ENCODE measurements at regions of chr5 and their contacts with region 1.

Region 1: DNA sequence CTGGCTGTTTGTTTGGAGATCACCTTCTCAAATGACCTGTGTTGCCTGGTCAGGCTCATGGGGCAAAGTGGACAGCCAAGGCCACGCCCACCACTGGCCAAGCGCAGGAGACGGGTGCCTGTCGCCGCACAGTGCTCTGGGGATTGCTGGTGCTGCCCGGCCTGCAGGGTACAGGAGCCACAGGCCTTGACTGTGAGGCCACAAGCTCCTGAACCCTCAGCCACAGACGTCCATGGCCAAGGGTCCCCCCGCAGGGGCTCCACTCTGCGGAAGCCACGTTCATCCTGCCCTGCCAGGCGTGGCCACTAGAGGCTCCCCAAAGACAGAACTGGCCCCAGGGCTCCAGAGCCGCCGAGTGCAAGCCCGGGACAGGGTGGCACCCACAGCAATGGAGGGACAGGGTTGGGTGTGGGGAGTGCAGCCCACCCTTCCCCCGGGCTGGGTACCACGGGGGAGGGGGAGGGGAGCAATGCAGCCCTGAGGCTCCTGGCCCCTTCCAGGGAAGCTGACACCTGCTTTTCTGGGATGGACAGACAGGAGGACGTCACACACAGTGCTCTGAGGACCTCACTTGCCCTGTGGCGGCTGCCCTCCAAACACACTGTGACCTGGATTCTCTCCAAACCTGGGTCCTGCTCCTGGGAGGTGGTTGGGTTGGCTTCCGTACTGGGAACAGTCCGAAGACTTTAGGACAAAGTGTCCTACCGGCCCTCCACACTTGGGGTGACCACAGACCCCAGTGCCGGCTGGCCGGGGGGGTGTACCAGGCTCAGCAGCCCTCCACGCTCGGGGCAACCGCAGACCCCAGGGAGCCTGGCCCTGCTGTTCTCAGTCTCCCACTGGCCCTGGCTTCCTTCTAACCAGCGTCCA is 21.5 kb downstream of the TPPP start:
- DNase-seq: peak; percentile 52
- H3K4me3 ChIP-seq: no peak overlapping the region
- H3K27ac ChIP-seq: no peak overlapping the region
- H3K4me1 ChIP-seq: no peaks in the 10 kb centered on the region
- H3K27me3 ChIP-seq: no peaks in the 10 kb centered on the region
- CTCF ChIP-seq: peak; percentile 83 to 95
- POLR2A ChIP-seq: no peak

Region 2: DNA sequence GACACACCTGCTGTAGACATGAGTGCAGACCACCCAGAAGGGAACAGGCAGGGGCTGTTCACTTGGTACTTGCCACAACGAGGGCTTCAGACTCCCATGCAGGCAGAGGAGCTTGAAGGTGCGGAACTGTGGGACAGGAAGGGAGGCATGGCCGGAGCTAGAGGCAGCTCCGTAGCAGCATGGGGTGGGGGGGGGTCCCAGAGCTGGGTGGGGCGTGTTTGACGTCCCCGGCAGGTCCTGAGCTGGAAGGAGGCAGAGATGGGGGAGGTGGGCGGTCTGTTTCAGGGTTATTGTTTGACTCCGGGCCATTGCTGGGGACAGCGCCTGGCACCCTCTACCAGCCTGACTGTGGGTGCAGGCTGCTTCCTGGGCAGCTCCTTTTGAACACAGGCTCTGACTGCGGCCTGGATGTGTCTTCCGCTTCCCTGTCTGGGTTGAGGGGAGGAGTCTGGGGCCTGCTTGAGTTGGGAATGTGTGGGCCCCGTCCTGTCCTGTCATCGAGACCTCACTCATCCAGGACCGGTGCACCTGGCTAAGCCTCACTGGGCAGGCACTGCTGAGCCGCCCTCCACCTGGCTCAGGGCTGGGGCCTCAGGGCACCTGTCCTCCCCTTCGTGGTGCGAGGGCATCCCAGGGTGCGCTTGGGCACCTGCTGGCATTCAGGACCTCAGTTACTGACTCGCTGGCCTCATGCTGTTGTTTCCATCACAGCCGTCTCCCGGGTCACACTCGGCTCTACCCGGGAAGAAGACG is 33.1 kb before region 1 on chr5:
- CTCF ChIA-PET with region 1: interaction called, 4 read pairs
- POLR2A ChIA-PET with region 1: no interaction called
- dilution Hi-C with region 1: no loop called
- intact Hi-C with region 1: loop called (anchors 1 kb)
- DNase-seq: no peak
- H3K4me3 ChIP-seq: no peak overlapping the region
- H3K27ac ChIP-seq: no peak overlapping the region
- H3K4me1 ChIP-seq: no peaks in the 10 kb centered on the region
- H3K27me3 ChIP-seq: no peaks in the 10 kb centered on the region
- CTCF ChIP-seq: no peak
- POLR2A ChIP-seq: no peak

Region 3: GRCh38 chr5:685262-686171 is 13.8 kb after region 1 on chr5:
- CTCF ChIA-PET with region 1: no interaction called
- POLR2A ChIA-PET with region 1: no interaction called
- dilution Hi-C with region 1: no loop called
- intact Hi-C with region 1: no loop called
- DNase-seq: no peak
- H3K4me3 ChIP-seq: no peak overlapping the region
- H3K27ac ChIP-seq: no peak overlapping the region
- H3K4me1 ChIP-seq: no peaks in the 10 kb centered on the region
- H3K27me3 ChIP-seq: no peaks in the 10 kb centered on the region
- CTCF ChIP-seq: no peak
- POLR2A ChIP-seq: no peak

Region 4: DNA sequence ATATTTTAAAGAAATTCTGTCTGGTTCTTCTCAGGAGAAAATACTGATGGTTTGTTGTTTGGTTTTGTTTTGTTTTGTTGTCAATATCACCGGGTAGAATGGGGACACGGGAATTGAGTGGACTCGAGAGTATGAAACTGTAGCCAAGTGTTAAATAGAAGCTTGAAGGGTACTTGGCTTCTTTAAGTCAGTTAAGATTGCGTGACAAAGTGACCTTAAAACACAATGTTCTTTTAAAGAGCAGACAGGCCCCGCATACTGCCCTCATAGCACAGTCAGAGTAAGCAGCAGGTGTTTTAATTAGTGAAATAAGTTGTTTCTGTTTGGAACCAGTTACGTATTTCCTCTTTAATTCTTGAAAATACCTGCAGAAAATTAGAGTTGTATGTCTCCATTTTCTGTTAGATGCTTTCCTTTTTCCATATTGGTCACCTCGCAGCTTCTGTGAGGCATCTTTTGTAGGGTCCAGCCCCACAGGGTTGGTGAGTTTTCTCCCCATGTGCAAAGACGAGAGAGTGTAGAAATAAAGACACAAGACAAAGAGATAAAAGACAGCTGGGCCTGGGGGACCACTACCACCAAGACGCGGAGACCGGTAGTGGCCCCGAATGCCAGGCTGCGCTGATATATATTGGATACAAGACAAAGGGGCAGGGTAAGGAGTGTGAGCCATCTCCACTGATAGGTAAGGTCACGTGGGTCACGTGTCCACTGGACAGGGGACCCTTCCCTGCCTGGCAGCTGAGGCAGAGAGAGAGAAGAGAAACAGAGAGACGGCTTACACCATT is 230.6 kb after region 1 on chr5:
- CTCF ChIA-PET with region 1: interaction called, 101 read pairs
- POLR2A ChIA-PET with region 1: no interaction called
- dilution Hi-C with region 1: no loop called
- intact Hi-C with region 1: loop called (anchors 2 kb)
- DNase-seq: no peak
- H3K4me3 ChIP-seq: no peak overlapping the region
- H3K27ac ChIP-seq: no peak overlapping the region
- H3K4me1 ChIP-seq: no peaks in the 10 kb centered on the region
- H3K27me3 ChIP-seq: no peaks in the 10 kb centered on the region
- CTCF ChIP-seq: no peak
- POLR2A ChIP-seq: no peak

Measured in endothelial cell of umbilical vein (primary cell).